ENCODE measurements at regions of chr11 and their contacts with region 1.

Region 1: GRCh38 chr11:88552377-88553062 is 215.0 kb upstream of the CTSC start:
- DNase-seq: no peak
- H3K4me3 ChIP-seq: no peak overlapping the region
- H3K27ac ChIP-seq: no peak overlapping the region
- H3K4me1 ChIP-seq: peaks cover 0 to 6% (median 0%) of the 10 kb centered on the region in 4 donors
- H3K27me3 ChIP-seq: no peaks in the 10 kb centered on the region
- CTCF ChIP-seq: peak in 2 of 3 experiments; percentile 30 to 44
- EP300 ChIP-seq: no peak
- POLR2A ChIP-seq: no peak

Region 2: GRCh38 chr11:87352759-87353707 is 1199.5 kb before region 1 on chr11:
- intact Hi-C with region 1: loop called (anchors 10 kb)
- DNase-seq: no peak
- H3K4me3 ChIP-seq: no peak overlapping the region
- H3K27ac ChIP-seq: no peak overlapping the region
- H3K4me1 ChIP-seq: peaks cover 15 to 32% (median 23%) of the 10 kb centered on the region in 4 donors
- H3K27me3 ChIP-seq: no peaks in the 10 kb centered on the region
- CTCF ChIP-seq: peak in 2 of 3 experiments; percentile 96 to 99
- EP300 ChIP-seq: no peak
- POLR2A ChIP-seq: no peak